HEK293 (cell line): ENCODE measurements at regions of chr1 and their contacts with region 1.

Region 1: GRCh38 chr1:108643492-108644335 is 17.2 kb downstream of the HENMT1 start:
- H3K4me3 ChIP-seq: no peak overlapping the region
- H3K27ac ChIP-seq: no peak overlapping the region
- H3K4me1 ChIP-seq: no peaks in the 10 kb centered on the region
- CTCF ChIP-seq: peak; percentile 34; the same call in 1 of the 2 replicates

Region 2: GRCh38 chr1:108504447-108504846 is 139.3 kb before region 1 on chr1:
- CTCF ChIA-PET with region 1: interaction called, 91 read pairs
- POLR2A ChIA-PET with region 1: no interaction called
- H3K4me3 ChIP-seq: no peak overlapping the region
- H3K27ac ChIP-seq: no peak overlapping the region
- H3K4me1 ChIP-seq: no peaks in the 10 kb centered on the region
- CTCF ChIP-seq: no peak

Region 3: DNA sequence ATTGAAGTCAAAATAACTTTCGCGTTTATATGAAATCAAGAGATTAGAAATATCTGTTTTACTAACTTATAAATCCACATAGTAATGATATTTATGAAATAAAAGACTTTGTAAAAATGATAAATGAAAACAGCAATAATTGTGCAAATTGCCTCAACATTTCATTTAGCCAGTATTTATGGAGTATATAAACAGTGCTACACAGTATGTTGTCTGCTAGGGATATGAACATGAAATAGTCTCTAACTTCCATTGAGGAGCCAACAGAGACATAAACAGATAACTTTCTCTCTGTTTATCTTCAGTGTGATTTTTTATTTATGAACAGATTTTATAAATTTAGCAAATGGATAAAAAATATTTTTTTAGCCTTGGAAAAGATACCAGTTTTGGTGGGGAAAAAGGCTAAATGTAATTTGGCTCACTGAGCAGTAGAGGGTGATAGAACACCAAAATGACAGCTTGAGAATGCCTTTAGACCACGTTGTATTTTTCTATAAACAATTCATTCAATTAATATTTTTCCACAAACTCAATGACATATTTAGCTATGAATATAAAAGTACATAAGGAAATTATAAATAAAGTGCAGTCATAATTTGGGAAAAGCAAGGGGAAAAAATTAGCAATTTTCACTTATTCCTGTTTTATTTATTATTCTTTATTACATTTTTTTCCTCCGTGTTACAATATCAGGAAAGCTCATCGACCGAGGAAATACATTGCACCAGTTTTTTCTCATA is 131.3 kb before region 1 on chr1:
- CTCF ChIA-PET with region 1: interaction called, 91 read pairs
- POLR2A ChIA-PET with region 1: interaction called, 4 read pairs
- H3K4me3 ChIP-seq: no peak overlapping the region
- H3K27ac ChIP-seq: no peak overlapping the region
- H3K4me1 ChIP-seq: no peaks in the 10 kb centered on the region
- CTCF ChIP-seq: peak; percentile 40

Region 4: DNA sequence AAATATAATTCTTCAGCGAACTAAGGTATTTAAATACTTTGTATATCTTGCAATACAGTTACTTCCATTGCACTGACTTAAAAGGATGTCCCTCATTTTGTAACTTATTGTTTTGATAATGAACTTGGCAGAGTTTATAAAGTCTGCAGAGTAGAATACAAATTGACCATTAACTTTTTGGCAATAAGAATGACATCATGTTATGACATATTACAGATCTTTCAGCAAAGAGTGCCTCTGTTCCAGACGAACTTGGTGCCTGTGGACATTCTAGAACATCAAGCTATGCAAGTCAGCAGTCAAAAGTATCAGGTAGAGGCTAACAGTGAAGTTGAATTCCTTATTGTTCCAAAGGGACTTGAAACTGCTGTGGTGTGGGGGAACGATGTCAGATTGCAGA is 15.8 kb before region 1 on chr1:
- CTCF ChIA-PET with region 1: interaction called, 10 read pairs
- POLR2A ChIA-PET with region 1: no interaction called
- H3K4me3 ChIP-seq: no peak overlapping the region
- H3K27ac ChIP-seq: no peak overlapping the region
- H3K4me1 ChIP-seq: no peaks in the 10 kb centered on the region
- CTCF ChIP-seq: no peak

Region 5: DNA sequence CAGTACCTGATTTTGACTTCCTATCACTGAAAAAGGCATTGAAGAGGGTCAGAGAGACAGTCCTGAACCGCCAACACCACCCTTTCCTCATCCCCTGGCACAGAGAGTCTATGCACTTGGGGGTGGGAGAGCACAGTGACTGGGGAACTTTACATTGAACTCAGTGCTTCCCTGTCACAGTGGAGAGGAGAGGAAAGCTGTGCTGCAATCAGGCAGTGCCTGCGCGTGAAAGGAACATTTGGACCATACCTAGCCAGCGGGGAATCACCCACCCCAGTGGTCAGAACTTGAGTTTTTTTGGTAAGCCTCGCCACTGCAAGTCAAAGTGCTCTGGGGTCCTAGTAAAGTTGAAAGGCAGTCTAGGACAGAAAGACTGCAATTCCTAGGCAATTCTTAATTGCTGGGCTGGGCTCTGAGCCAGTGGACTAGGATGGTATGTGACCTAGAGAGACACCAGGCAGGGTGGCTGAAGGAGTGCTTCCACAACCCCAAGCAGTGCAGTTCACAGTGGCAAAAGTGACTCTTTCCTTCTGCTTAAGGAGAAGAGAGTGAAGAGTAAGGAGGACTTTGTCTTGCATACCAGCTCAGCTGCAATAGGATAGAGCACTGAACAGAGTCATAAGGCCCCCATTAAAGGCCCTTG is 26.5 kb after region 1 on chr1:
- CTCF ChIA-PET with region 1: no interaction called
- POLR2A ChIA-PET with region 1: no interaction called
- H3K4me3 ChIP-seq: no peak overlapping the region
- H3K27ac ChIP-seq: no peak overlapping the region
- H3K4me1 ChIP-seq: no peaks in the 10 kb centered on the region
- CTCF ChIP-seq: no peak